AG04449 (cell line): ENCODE measurements at regions of chr1 and their contacts with region 1.

Region 1: DNA sequence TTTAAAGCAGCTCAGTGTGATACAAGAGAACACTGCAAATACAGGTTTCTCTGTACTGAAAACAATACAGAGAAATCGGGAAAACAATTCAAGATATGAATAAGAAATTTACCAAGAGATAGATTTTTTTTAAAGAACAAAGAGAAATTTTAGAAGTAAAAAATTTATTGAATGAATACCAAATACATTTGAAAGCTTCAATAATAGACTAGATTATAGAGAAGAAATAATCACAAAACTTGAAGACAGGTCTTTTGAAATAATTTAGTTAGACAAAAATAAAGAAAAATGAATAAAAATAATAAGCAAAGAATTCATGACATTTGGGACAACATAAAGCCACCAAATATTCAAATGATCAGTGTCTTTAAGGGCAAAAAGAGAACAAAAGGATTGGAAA is 13.6 kb upstream of the FMO4 start:
- DNase-seq: no peak
- H3K4me3 ChIP-seq: no peak overlapping the region
- CTCF ChIP-seq: no peak

Region 2: GRCh38 chr1:171115280-171115897 is 185.0 kb before region 1 on chr1:
- CTCF ChIA-PET with region 1: no interaction called
- POLR2A ChIA-PET with region 1: no interaction called
- DNase-seq: no peak
- H3K4me3 ChIP-seq: no peak overlapping the region
- CTCF ChIP-seq: no peak

Region 3: DNA sequence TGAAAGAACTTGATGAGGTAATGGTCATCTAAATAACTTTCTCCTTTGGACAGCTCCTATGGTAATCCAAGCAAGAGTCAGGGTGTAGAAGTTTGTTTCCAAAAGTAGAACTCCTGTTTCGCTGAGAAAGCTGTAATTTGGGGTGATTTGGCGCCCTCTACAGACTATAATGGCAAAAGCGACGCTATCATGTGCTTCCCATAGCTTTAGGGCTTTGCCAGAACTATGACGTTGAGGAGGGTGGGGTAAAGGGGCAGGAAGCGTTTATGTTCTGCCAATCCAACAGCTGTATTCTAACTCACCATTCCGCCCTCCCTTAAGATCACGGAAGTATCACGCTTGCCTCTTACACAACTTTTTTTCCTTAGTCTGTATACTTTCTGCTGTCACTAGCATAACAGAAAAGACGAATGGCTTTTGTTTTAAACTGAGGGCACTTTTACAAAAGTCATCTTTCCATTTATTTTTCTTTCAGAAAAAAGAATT is 13.5 kb after region 1 on chr1 and contains the start of gene FMO4:
- CTCF ChIA-PET with region 1: interaction called, 12 read pairs
- POLR2A ChIA-PET with region 1: no interaction called
- DNase-seq: peak; percentile 95
- H3K4me3 ChIP-seq: peak within 1 kb of the TSS; percentile 24; the same call in 1 of the 2 replicates
- CTCF ChIP-seq: peak; percentile 60